ENCODE measurements at regions of chr20 and their contacts with region 1.

Region 1: GRCh38 chr20:45293041-45294002 is 13.3 kb upstream of the RBPJL start:
- DNase-seq: peak; percentile 91
- ATAC-seq: peak; percentile 92
- H3K4me3 Mint-ChIP-seq: peak overlapping the region; percentile 69
- H3K27ac Mint-ChIP-seq: no peak overlapping the region
- H3K4me1 Mint-ChIP-seq: peaks cover 2% of the 10 kb centered on the region
- H3K27me3 Mint-ChIP-seq: peaks cover 31% of the 10 kb centered on the region
- CTCF ChIP-seq: peak; percentile 98

Region 2: DNA sequence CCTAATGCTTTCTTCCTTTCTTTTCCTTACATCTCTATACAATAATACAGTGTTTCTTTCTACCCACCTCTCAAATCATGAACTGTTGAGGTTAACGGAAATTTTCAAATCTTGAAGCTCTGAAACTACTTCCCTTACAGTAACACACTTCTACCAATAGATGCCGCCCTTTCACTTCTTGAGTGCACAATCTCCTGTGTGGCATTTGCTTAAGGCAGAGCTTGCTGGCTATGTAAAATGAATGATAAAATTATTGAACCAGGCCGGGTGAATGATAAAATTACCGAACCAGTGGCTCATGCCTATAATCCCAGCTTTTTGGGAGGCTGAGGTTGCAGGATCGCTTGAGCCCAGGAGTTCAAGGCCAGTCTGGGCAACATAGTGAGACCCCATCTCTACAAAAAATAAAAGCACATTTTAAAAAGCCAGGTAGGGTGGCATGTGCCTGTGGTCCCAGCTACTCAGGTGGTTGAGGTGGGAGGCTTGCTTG is 249.2 kb before region 1 on chr20:
- CTCF ChIA-PET with region 1: interaction called, 32 read pairs
- POLR2A ChIA-PET with region 1: no interaction called
- intact Hi-C with region 1: no loop called
- DNase-seq: peak; percentile 56
- ATAC-seq: peak; percentile 88
- H3K4me3 Mint-ChIP-seq: no peak overlapping the region
- H3K27ac Mint-ChIP-seq: peak overlapping the region; percentile 97
- H3K4me1 Mint-ChIP-seq: peaks cover 77% of the 10 kb centered on the region
- H3K27me3 Mint-ChIP-seq: no peaks in the 10 kb centered on the region
- CTCF ChIP-seq: peak; percentile 88

Region 3: GRCh38 chr20:45138561-45139300 is 154.6 kb before region 1 on chr20:
- CTCF ChIA-PET with region 1: interaction called, 79 read pairs
- POLR2A ChIA-PET with region 1: interaction called, 3 read pairs
- intact Hi-C with region 1: loop called (anchors 5 kb)
- DNase-seq: peak; percentile 89
- ATAC-seq: peak; percentile 85
- H3K4me3 Mint-ChIP-seq: no peak overlapping the region
- H3K27ac Mint-ChIP-seq: no peak overlapping the region
- H3K4me1 Mint-ChIP-seq: no peaks in the 10 kb centered on the region
- H3K27me3 Mint-ChIP-seq: peaks cover 5% of the 10 kb centered on the region
- CTCF ChIP-seq: peak; percentile 82

Region 4: GRCh38 chr20:45235995-45236394 is 57.3 kb before region 1 on chr20:
- CTCF ChIA-PET with region 1: interaction called, 13 read pairs
- POLR2A ChIA-PET with region 1: no interaction called
- intact Hi-C with region 1: no loop called
- DNase-seq: peak; percentile 18
- ATAC-seq: no peak
- H3K4me3 Mint-ChIP-seq: no peak overlapping the region
- H3K27ac Mint-ChIP-seq: no peak overlapping the region
- H3K4me1 Mint-ChIP-seq: no peaks in the 10 kb centered on the region
- H3K27me3 Mint-ChIP-seq: peaks cover 28% of the 10 kb centered on the region
- CTCF ChIP-seq: peak; percentile 30

Region 5: GRCh38 chr20:45282700-45283547 is 10.4 kb before region 1 on chr20:
- CTCF ChIA-PET with region 1: interaction called, 44 read pairs
- POLR2A ChIA-PET with region 1: no interaction called
- intact Hi-C with region 1: no loop called
- DNase-seq: no peak
- ATAC-seq: no peak
- H3K4me3 Mint-ChIP-seq: no peak overlapping the region
- H3K27ac Mint-ChIP-seq: no peak overlapping the region
- H3K4me1 Mint-ChIP-seq: no peaks in the 10 kb centered on the region
- H3K27me3 Mint-ChIP-seq: peaks cover 10% of the 10 kb centered on the region
- CTCF ChIP-seq: no peak

Region 6: DNA sequence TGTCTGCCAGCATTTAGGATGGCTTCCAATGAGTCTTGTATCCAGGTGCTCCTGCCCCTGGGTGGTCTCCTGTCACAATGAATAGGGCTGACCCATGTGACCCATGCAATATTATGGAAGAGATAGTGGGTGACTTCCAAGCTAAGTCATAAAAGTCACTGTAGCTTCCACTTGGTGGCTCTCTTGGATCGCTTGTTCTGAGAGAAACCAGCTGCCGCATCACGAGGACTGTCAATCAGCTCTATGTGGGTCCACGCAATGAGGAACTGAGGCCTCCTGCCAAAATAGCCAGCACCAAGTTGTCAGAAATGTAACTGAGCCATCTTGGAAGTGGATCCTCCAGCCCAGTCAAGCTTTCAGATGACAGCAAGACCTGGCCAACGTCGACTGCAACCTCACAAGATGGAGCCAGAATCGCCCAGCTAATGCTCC is 29.6 kb after region 1 on chr20:
- CTCF ChIA-PET with region 1: interaction called, 61 read pairs
- POLR2A ChIA-PET with region 1: interaction called, 3 read pairs
- intact Hi-C with region 1: no loop called
- DNase-seq: peak; percentile 43
- ATAC-seq: no peak
- H3K4me3 Mint-ChIP-seq: no peak overlapping the region
- H3K27ac Mint-ChIP-seq: no peak overlapping the region
- H3K4me1 Mint-ChIP-seq: peaks cover 25% of the 10 kb centered on the region
- H3K27me3 Mint-ChIP-seq: no peaks in the 10 kb centered on the region
- CTCF ChIP-seq: no peak

Region 7: GRCh38 chr20:45406259-45407066 is 113.1 kb after region 1 on chr20:
- CTCF ChIA-PET with region 1: no interaction called
- POLR2A ChIA-PET with region 1: no interaction called
- intact Hi-C with region 1: no loop called
- DNase-seq: peak; percentile 53
- ATAC-seq: peak; percentile 52
- H3K4me3 Mint-ChIP-seq: peak overlapping the region; percentile 73
- H3K27ac Mint-ChIP-seq: peak overlapping the region; percentile 63
- H3K4me1 Mint-ChIP-seq: peaks cover 21% of the 10 kb centered on the region
- H3K27me3 Mint-ChIP-seq: peaks cover 4% of the 10 kb centered on the region
- CTCF ChIP-seq: no peak

Measured in activated CD8-positive, alpha-beta T cell treated with anti-CD3 and anti-CD28 coated beads for 36 hours (primary cell).